AG04450 (cell line): ENCODE measurements at regions of chr11 and their contacts with region 1.

Region 1: GRCh38 chr11:83819933-83820549 is 533.9 kb upstream of the CCDC90B start:
- DNase-seq: peak; percentile 52
- H3K4me3 ChIP-seq: no peak overlapping the region
- H3K27ac ChIP-seq: no peak overlapping the region
- H3K27me3 ChIP-seq: no peaks in the 10 kb centered on the region
- CTCF ChIP-seq: peak; percentile 58

Region 2: GRCh38 chr11:82718307-82718706 is 1101.7 kb before region 1 on chr11:
- CTCF ChIA-PET with region 1: interaction called, 27 read pairs
- POLR2A ChIA-PET with region 1: no interaction called
- DNase-seq: peak; percentile 20
- H3K4me3 ChIP-seq: no peak overlapping the region
- H3K27ac ChIP-seq: no peak overlapping the region
- H3K27me3 ChIP-seq: peaks cover 4% of the 10 kb centered on the region
- CTCF ChIP-seq: peak; percentile 83

Region 3: GRCh38 chr11:83056204-83056603 is 763.8 kb before region 1 on chr11:
- CTCF ChIA-PET with region 1: no interaction called
- POLR2A ChIA-PET with region 1: no interaction called
- DNase-seq: no peak
- H3K4me3 ChIP-seq: no peak overlapping the region
- H3K27ac ChIP-seq: no peak overlapping the region
- H3K27me3 ChIP-seq: no peaks in the 10 kb centered on the region
- CTCF ChIP-seq: no peak

Region 4: GRCh38 chr11:83521647-83522596 is 298.1 kb before region 1 on chr11:
- CTCF ChIA-PET with region 1: interaction called, 16 read pairs
- POLR2A ChIA-PET with region 1: no interaction called
- DNase-seq: no peak
- H3K4me3 ChIP-seq: no peak overlapping the region
- H3K27ac ChIP-seq: no peak overlapping the region
- H3K27me3 ChIP-seq: no peaks in the 10 kb centered on the region
- CTCF ChIP-seq: peak; percentile 53

Region 5: DNA sequence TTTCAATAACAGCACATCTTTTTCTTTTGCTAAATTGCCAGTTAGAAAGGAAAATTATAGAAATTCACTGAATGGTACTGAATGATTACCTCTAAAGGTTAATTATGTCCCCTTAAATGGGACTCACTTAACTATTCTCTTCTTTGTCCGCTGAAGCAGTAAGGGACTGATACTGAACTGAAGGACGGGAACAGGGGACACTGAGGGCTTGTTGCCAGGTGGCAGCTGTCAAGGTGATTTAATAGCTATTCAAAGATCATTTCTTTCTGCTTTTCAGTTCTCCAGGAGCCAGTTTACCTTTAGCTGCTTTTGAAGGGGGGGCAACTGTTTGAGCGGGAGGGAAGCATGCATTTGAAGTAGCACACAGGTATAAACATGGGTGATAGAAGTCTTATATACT is 208.4 kb before region 1 on chr11:
- CTCF ChIA-PET with region 1: no interaction called
- POLR2A ChIA-PET with region 1: no interaction called
- DNase-seq: no peak
- H3K4me3 ChIP-seq: no peak overlapping the region
- H3K27ac ChIP-seq: no peak overlapping the region
- H3K27me3 ChIP-seq: no peaks in the 10 kb centered on the region
- CTCF ChIP-seq: no peak

Region 6: DNA sequence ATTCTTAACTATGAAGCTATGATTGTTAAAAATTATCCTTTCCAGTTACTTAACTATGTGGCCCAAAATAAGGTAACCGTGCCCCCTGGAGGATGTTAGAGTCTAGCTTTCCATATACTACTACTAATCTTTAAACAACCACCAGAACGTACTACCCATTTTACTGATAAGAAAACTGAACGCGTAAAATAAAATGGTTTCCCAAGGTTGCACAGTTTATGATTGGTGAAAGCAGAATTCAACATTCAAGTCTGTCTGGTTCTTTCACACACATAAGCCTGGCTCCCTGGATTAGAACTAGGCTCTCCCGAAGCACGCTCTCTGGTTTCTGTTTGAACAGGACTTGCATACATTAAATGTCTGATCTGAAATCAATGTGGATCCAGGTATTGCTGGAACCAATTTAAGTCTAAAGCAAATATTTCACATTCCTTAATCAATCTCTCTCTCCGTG is 96.0 kb before region 1 on chr11:
- CTCF ChIA-PET with region 1: interaction called, 10 read pairs
- POLR2A ChIA-PET with region 1: no interaction called
- DNase-seq: peak; percentile 26
- H3K4me3 ChIP-seq: 0 out of 2 replicates have a peak overlapping the region, but pooled peaks have one; percentile 0
- H3K27ac ChIP-seq: no peak overlapping the region
- H3K27me3 ChIP-seq: peaks cover 7% of the 10 kb centered on the region
- CTCF ChIP-seq: peak; percentile 62

Region 7: GRCh38 chr11:83801780-83802179 is 18.3 kb before region 1 on chr11:
- CTCF ChIA-PET with region 1: interaction called, 27 read pairs
- POLR2A ChIA-PET with region 1: no interaction called
- DNase-seq: no peak
- H3K4me3 ChIP-seq: no peak overlapping the region
- H3K27ac ChIP-seq: no peak overlapping the region
- H3K27me3 ChIP-seq: peaks cover 5% of the 10 kb centered on the region
- CTCF ChIP-seq: no peak; the same call in 1 of the 2 replicates

Region 8: DNA sequence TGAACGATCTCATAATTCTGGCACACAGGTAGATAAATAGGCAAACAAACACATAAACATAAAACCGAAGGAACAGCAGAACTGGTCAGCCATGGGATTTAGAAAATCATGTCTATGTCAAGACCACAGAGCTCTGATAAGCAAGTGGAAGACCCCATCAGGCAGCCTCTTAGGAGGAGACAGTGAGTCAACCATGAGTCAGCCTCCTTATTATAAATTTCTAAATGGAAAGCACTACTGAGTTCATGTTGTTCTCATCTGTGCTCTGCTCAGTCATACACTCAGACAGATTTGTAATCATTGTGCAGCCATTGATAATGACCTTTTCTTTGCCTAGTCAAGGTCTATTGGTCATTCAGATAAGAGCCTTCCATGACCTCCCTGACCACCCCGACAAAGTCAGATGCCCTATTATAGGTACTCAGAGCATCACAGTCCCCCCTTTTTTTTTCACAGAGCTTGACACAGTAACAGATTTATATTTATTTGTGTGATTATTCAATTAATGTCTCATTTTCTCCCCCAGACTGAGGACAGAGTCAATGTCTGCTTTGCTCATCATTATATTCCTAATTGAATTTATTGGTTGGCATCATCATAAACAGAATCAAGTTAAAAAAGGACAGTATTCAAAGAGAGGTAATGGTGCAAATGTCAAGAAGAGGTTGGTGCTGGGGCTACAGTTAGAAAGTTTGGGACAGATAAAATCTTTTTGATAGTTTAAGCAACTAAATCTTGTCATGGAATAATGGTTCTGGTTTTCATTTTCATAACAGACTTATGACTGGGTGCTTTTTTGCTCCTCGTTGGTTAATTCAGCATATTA is 45.8 kb after region 1 on chr11:
- CTCF ChIA-PET with region 1: no interaction called
- POLR2A ChIA-PET with region 1: no interaction called
- DNase-seq: no peak
- H3K4me3 ChIP-seq: no peak overlapping the region
- H3K27ac ChIP-seq: no peak overlapping the region
- H3K27me3 ChIP-seq: no peaks in the 10 kb centered on the region
- CTCF ChIP-seq: no peak

Region 9: GRCh38 chr11:84035645-84036044 is 215.6 kb after region 1 on chr11:
- CTCF ChIA-PET with region 1: no interaction called
- POLR2A ChIA-PET with region 1: no interaction called
- DNase-seq: no peak
- H3K4me3 ChIP-seq: no peak overlapping the region
- H3K27ac ChIP-seq: no peak overlapping the region
- H3K27me3 ChIP-seq: no peaks in the 10 kb centered on the region
- CTCF ChIP-seq: no peak